Heart left ventricle (tissue), 16 donors: ENCODE measurements at regions of chr2 and their contacts with region 1.

Region 1: GRCh38 chr2:210399440-210400041 is 77.0 kb downstream of the LANCL1 start:
- DNase-seq: no peak
- ATAC-seq: no peak
- H3K4me3 ChIP-seq: no peak overlapping the region
- H3K27ac ChIP-seq: no peak overlapping the region
- H3K4me1 ChIP-seq: peaks cover 0 to 6% (median 0%) of the 10 kb centered on the region in 12 donors
- H3K27me3 ChIP-seq: no peaks in the 10 kb centered on the region
- CTCF ChIP-seq: peak; percentile 24 to 61 (median 52)
- POLR2A ChIP-seq: no peak

Region 2: DNA sequence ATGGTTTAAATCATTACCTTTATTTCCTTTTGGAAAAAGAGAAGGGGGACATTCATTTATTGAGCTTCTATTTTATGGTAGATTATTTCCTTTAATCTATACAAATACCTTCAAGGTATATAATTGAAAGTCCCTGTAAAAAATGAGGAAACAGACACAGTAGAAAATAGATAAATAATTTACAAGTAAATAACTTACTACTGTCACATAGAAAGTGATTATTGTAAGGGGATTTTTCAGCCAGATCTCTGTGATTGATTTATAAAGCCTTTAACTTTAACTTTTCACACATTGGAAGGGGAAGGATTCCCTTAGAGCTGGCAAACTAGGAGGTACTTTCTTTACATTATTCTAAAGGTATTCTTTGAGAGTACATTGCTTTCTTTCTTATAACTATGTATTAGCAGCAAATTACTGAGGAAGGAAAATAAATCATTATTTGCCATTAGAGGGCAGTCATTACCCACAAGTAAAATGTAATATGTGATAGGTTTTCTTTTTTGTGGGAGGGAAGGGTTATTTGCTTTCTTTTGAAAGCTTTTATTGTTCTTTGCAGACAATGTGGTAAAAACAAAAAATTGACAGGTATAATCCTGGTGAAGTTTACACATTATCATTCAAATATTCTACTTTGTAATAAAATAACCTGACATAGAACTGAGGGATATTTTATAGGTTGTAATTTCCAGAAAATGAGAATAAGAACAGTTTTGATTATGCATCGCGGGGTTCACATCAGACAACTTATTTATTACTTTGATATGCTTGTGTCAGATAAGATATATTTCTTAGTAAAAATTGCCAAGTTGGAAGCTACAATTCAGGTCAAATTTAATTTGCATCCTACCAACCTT is 421.9 kb before region 1 on chr2:
- intact Hi-C with region 1: loop called in 2 of 10 experiments (anchors 10 kb)
- DNase-seq: no peak
- ATAC-seq: no peak
- H3K4me3 ChIP-seq: no peak overlapping the region
- H3K27ac ChIP-seq: no peak overlapping the region
- H3K4me1 ChIP-seq: no peaks in the 10 kb centered on the region
- H3K27me3 ChIP-seq: peaks cover 0 to 2% (median 0%) of the 10 kb centered on the region in 9 donors
- CTCF ChIP-seq: peak; percentile 51 to 79 (median 65)
- POLR2A ChIP-seq: no peak

Region 3: GRCh38 chr2:210252699-210253606 is 146.6 kb before region 1 on chr2:
- intact Hi-C with region 1: loop called in 9 of 10 experiments (anchors 1 to 5 kb)
- DNase-seq: no peak
- ATAC-seq: no peak
- H3K4me3 ChIP-seq: no peak overlapping the region
- H3K27ac ChIP-seq: no peak overlapping the region
- H3K4me1 ChIP-seq: no peaks in the 10 kb centered on the region
- H3K27me3 ChIP-seq: no peaks in the 10 kb centered on the region
- CTCF ChIP-seq: no peak
- POLR2A ChIP-seq: no peak

Region 4: GRCh38 chr2:210363271-210363670 is 36.3 kb before region 1 on chr2:
- intact Hi-C with region 1: loop called in 1 of 10 experiments (anchors 5 kb)
- DNase-seq: no peak
- ATAC-seq: peak in 1 of 4 donors; percentile 22
- H3K4me3 ChIP-seq: no peak overlapping the region
- H3K27ac ChIP-seq: no peak overlapping the region
- H3K4me1 ChIP-seq: no peaks in the 10 kb centered on the region
- H3K27me3 ChIP-seq: no peaks in the 10 kb centered on the region
- CTCF ChIP-seq: peak in 6 of 12 donors; percentile 15 to 39 (median 22)
- POLR2A ChIP-seq: no peak